ENCODE measurements at regions of chr9 and their contacts with region 1.

Region 1: GRCh38 chr9:134339183-134339806 is 13.0 kb downstream of the RXRA start:
- DNase-seq: peak; percentile 36 to 78
- H3K4me3 ChIP-seq: peak overlapping the region in 3 of 4 donors; percentile 9 to 32 (median 18)
- H3K27ac ChIP-seq: peak overlapping the region; percentile 19 to 90 (median 42)
- H3K4me1 ChIP-seq: peaks cover 90 to 100% (median 99%) of the 10 kb centered on the region in 4 donors
- H3K27me3 ChIP-seq: no peaks in the 10 kb centered on the region
- CTCF ChIP-seq: no peak
- EP300 ChIP-seq: no peak
- POLR2A ChIP-seq: no peak

Region 2: GRCh38 chr9:134178768-134179551 is 160.3 kb before region 1 on chr9:
- intact Hi-C with region 1: loop called (anchors 10 kb)
- DNase-seq: peak in 1 of 2 donors; percentile 73
- H3K4me3 ChIP-seq: no peak overlapping the region
- H3K27ac ChIP-seq: peak overlapping the region in 1 of 5 donors; percentile 34
- H3K4me1 ChIP-seq: peaks cover 10 to 38% (median 25%) of the 10 kb centered on the region in 4 donors
- H3K27me3 ChIP-seq: peaks cover 0 to 55% (median 27%) of the 10 kb centered on the region in 3 donors
- CTCF ChIP-seq: no peak
- EP300 ChIP-seq: no peak
- POLR2A ChIP-seq: no peak

Region 3: GRCh38 chr9:134434894-134435506 is 95.7 kb after region 1 on chr9:
- intact Hi-C with region 1: loop called (anchors 10 kb)
- DNase-seq: peak; percentile 98
- H3K4me3 ChIP-seq: peak overlapping the region in 2 of 4 donors; percentile 19 to 32
- H3K27ac ChIP-seq: peak overlapping the region; percentile 78 to 91 (median 87)
- H3K4me1 ChIP-seq: peaks cover 67 to 84% (median 78%) of the 10 kb centered on the region in 4 donors
- H3K27me3 ChIP-seq: no peaks in the 10 kb centered on the region
- CTCF ChIP-seq: no peak
- EP300 ChIP-seq: peak; percentile 62
- POLR2A ChIP-seq: no peak

Measured in stomach (tissue), 19 donors.